Cardiac septum (tissue), 1 donor: ENCODE measurements at regions of chr4 and their contacts with region 1.

Region 1: GRCh38 chr4:18934197-18934596 is 912.6 kb upstream of the LCORL start:
- DNase-seq: no peak

Region 2: DNA sequence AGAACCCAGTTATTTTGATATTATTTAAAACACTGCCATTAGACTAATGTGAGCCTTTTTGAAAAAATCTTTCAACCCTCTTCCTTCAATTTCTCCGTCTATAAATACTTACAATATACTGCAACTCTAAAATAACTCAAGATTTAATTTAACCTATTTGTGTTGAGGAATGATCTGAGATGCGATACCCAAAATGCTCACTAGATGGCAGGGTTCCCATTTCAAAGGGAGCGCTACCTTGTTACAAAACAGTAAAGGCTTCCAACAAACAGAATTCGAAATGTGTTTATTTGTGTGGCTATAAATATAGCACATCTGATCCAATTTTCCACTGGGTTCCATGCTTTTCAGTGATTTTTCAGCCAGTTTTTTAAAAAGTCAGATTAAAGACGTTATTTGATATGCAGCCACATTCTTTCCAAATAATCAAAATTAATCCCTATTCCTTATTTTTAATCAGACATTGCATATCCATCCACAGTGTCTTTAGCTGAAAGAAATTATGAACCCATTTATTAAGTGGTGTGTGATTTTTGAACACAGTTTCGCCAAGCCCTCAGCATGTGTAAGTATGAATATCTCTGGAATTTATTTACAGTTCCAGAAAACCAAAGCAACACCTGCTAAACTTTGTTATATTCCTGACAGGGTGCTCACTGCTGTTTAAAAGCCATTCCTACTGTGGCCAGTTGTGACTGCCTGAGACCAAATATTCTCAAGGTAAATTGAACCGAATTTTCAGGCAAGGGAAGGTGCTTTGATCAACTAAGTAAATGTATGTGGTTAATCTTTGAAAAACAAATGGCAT is 244.7 kb before region 1 on chr4:
- intact Hi-C with region 1: loop called (anchors 2 kb)
- DNase-seq: no peak

Region 3: GRCh38 chr4:18815779-18816173 is 118.4 kb before region 1 on chr4:
- intact Hi-C with region 1: no loop called
- DNase-seq: no peak